Gastrocnemius medialis (tissue), 4 donors: ENCODE measurements at regions of chr20 and their contacts with region 1.

Region 1: DNA sequence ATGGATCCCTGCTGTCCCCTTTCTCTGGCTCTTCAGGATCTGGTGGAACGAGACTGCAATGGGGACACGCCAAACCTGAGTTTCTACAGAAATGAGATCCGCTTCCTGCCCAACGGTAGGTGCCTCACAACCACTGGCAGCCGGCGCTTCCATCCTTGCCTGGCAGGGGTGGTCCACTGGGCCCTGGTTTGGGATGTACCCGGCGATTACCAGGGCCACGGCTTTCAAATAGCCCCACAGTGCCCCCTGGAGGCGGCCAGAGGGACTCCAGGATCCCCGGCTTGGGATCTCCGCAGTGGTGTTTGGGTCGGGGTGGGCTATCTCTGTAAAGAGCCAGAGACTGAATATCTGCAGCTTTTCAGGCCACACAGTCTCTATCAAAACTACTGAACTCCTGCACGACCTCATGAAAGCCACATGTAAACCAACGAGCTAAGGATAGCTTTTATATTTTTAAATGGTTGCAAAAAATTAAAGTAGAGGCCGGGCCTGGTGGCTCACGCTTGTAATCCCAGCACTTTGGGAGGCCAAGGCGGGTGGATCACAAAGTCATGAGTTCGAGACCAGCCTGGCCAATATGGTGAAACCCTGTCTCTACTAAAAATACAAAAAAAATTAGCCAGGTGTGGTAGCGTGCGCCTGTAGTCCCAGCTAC is 3.7 kb downstream of the OGFR start:
- DNase-seq: peak in 1 of 2 donors; percentile 56
- ATAC-seq: peak; percentile 42 to 53
- H3K4me3 ChIP-seq: no peak overlapping the region
- H3K27ac ChIP-seq: no peak overlapping the region
- H3K4me1 ChIP-seq: peaks cover 15 to 27% of the 10 kb centered on the region in 2 donors
- H3K27me3 ChIP-seq: no peaks in the 10 kb centered on the region
- CTCF ChIP-seq: peak; percentile 85 to 98 (median 94)
- POLR2A ChIP-seq: no peak

Region 2: DNA sequence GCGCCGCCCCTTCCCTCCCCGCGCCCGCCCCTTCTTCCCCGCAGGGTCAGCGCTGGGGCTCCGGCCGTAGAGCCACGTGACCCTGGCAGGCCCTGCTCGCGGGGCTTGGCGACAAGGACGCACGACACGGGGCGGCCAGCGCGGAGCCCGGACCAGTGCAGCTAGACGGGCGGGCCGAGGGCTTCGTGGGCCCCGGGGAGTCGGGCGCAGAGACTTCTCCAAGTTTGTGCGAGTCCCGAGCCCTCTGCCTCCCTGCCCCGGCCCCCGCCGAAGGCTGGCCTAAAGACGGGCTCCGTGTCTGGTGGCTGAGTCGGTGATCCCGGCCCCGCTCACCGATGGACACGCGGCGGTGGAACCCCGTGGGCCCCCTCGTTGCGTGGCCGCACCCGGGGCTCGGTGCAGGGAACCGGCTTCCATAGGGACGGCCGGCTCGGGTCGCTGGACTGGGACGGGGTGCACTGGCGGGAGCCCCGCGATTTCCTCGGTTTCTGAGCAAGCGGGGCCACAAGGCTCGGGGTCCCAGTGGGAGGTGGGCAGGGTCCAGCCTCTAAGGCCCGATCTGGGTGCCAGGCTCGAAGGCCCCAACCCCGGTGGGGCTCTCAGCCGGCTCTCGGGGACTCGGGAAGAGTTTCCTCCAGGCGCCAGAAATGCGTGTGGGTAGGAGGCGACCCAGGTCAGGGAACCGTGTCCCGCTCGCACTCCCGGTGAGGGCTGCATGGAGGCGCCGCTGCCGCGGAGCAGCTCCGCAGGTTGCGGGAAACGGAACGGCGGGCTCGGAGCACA is 332.1 kb before region 1 on chr20:
- in situ Hi-C with region 1: no loop called
- intact Hi-C with region 1: no loop called
- DNase-seq: no peak
- ATAC-seq: peak in 1 of 2 donors; percentile 18
- H3K4me3 ChIP-seq: peak overlapping the region; percentile 16 to 42 (median 23)
- H3K27ac ChIP-seq: no peak overlapping the region
- H3K4me1 ChIP-seq: peaks cover 0 to 7% of the 10 kb centered on the region in 2 donors
- H3K27me3 ChIP-seq: peaks cover 58 to 67% (median 62%) of the 10 kb centered on the region in 3 donors
- CTCF ChIP-seq: no peak
- POLR2A ChIP-seq: no peak

Region 3: GRCh38 chr20:62668441-62669027 is 139.8 kb before region 1 on chr20:
- in situ Hi-C with region 1: loop called in 3 of 4 experiments (anchors 5 to 10 kb)
- intact Hi-C with region 1: loop called (anchors 1 kb)
- DNase-seq: peak; percentile 40 to 69
- ATAC-seq: peak; percentile 64 to 74
- H3K4me3 ChIP-seq: no peak overlapping the region
- H3K27ac ChIP-seq: no peak overlapping the region
- H3K4me1 ChIP-seq: peaks cover 0 to 3% of the 10 kb centered on the region in 2 donors
- H3K27me3 ChIP-seq: peaks cover 0 to 2% (median 0%) of the 10 kb centered on the region in 3 donors
- CTCF ChIP-seq: peak; percentile 78 to 91 (median 87)
- POLR2A ChIP-seq: no peak

Region 4: GRCh38 chr20:62675156-62675876 is 133.0 kb before region 1 on chr20:
- in situ Hi-C with region 1: loop called in 1 of 4 experiments (anchors 10 kb)
- intact Hi-C with region 1: no loop called
- DNase-seq: no peak
- ATAC-seq: no peak
- H3K4me3 ChIP-seq: no peak overlapping the region
- H3K27ac ChIP-seq: no peak overlapping the region
- H3K4me1 ChIP-seq: no peaks in the 10 kb centered on the region
- H3K27me3 ChIP-seq: peaks cover 10 to 37% (median 16%) of the 10 kb centered on the region in 3 donors
- CTCF ChIP-seq: no peak
- POLR2A ChIP-seq: no peak

Region 5: DNA sequence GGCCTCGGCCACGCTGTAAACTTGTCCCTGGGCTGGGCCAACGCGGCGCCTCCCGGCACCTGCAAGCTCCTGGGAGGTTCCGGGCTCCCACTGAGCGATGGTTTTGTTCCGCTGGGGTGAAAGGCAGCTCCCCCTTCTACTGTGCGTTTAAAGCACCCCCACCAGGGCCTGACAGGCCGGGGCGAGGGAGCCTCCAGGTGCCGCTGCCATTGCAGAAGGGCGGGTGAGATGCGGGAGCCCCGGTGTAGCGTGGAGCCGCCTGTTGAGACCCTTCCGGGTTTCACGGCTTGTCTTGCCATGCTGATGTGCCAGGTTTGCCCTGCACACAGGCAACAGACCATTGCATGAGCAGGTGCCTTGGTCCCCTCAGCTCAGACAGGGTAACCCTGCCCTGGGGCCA is 487.5 kb after region 1 on chr20:
- in situ Hi-C with region 1: no loop called
- intact Hi-C with region 1: no loop called
- DNase-seq: no peak
- ATAC-seq: no peak
- H3K4me3 ChIP-seq: no peak overlapping the region
- H3K27ac ChIP-seq: no peak overlapping the region
- H3K4me1 ChIP-seq: no peaks in the 10 kb centered on the region
- H3K27me3 ChIP-seq: peaks cover 42 to 68% (median 67%) of the 10 kb centered on the region in 3 donors
- CTCF ChIP-seq: no peak
- POLR2A ChIP-seq: no peak